IMR-90 (cell line): ENCODE measurements at regions of chr12 and their contacts with region 1.

Region 1: GRCh38 chr12:6867413-6868210 is at the start of gene TPI1:
- DNase-seq: peak; percentile 74
- ATAC-seq: peak; percentile 82
- H3K4me3 ChIP-seq: peak within 1 kb of the TSS; percentile 87
- H3K27ac ChIP-seq: peak within 1 kb of the TSS; percentile 97
- H3K4me1 ChIP-seq: peaks cover 19% of the 10 kb centered on the region
- H3K27me3 ChIP-seq: no peaks in the 10 kb centered on the region
- CTCF ChIP-seq: no peak
- POLR2A ChIP-seq: peak; percentile 99
- RAD21 ChIP-seq: no peak
- total RNA-seq, gene TPI1: 1,842 and 2,176 TPM in 2 replicates

Region 2: GRCh38 chr12:6554168-6555017 is 313.2 kb before region 1 on chr12:
- CTCF ChIA-PET with region 1: no interaction called
- POLR2A ChIA-PET with region 1: interaction called, 10 read pairs
- dilution Hi-C with region 1: no loop called
- in situ Hi-C with region 1: no loop called
- intact Hi-C with region 1: no loop called
- DNase-seq: peak; percentile 72
- ATAC-seq: peak; percentile 40
- H3K4me3 ChIP-seq: peak overlapping the region; percentile 82
- H3K27ac ChIP-seq: peak overlapping the region; percentile 46
- H3K4me1 ChIP-seq: peaks cover 40% of the 10 kb centered on the region
- H3K27me3 ChIP-seq: no peaks in the 10 kb centered on the region
- CTCF ChIP-seq: peak; percentile 60
- POLR2A ChIP-seq: no peak
- RAD21 ChIP-seq: peak; percentile 43

Region 3: DNA sequence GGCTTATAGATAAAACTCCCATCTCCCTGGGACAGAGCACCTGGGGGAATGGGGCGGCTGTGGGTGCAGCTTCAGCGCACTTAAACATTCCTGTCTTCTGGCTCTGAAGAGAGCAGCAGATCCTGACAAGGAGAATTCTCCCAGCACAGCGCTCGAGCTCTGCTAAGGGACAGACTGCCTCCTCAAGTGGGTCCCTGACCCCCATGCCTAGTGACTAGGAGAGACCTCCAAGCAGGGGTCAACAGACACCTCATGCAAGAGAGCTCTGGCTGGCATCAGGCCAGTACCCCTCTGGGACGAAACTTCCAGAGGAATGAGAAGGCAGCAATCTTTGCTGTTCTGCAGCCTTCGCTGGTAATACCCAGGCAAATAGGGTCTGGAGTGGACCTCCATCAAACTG is 604.4 kb after region 1 on chr12:
- CTCF ChIA-PET with region 1: no interaction called
- POLR2A ChIA-PET with region 1: no interaction called
- dilution Hi-C with region 1: no loop called
- in situ Hi-C with region 1: no loop called
- intact Hi-C with region 1: no loop called
- DNase-seq: no peak
- ATAC-seq: no peak
- H3K4me3 ChIP-seq: no peak overlapping the region
- H3K27ac ChIP-seq: no peak overlapping the region
- H3K4me1 ChIP-seq: no peaks in the 10 kb centered on the region
- H3K27me3 ChIP-seq: no peaks in the 10 kb centered on the region
- CTCF ChIP-seq: no peak
- POLR2A ChIP-seq: no peak
- RAD21 ChIP-seq: no peak